ENCODE measurements at regions of chr19 and their contacts with region 1.

Region 1: GRCh38 chr19:50329146-50329925 is at the start of gene KCNC3:
- DNase-seq: peak; percentile 99
- H3K4me3 ChIP-seq: peak within 1 kb of the TSS; percentile 41
- H3K27ac ChIP-seq: peak within 1 kb of the TSS; percentile 40
- H3K4me1 ChIP-seq: peaks cover 15% of the 10 kb centered on the region
- H3K27me3 ChIP-seq: peaks cover 25% of the 10 kb centered on the region
- CTCF ChIP-seq: no peak
- total RNA-seq, gene KCNC3: 6.4 and 6.7 TPM in 2 replicates

Region 2: DNA sequence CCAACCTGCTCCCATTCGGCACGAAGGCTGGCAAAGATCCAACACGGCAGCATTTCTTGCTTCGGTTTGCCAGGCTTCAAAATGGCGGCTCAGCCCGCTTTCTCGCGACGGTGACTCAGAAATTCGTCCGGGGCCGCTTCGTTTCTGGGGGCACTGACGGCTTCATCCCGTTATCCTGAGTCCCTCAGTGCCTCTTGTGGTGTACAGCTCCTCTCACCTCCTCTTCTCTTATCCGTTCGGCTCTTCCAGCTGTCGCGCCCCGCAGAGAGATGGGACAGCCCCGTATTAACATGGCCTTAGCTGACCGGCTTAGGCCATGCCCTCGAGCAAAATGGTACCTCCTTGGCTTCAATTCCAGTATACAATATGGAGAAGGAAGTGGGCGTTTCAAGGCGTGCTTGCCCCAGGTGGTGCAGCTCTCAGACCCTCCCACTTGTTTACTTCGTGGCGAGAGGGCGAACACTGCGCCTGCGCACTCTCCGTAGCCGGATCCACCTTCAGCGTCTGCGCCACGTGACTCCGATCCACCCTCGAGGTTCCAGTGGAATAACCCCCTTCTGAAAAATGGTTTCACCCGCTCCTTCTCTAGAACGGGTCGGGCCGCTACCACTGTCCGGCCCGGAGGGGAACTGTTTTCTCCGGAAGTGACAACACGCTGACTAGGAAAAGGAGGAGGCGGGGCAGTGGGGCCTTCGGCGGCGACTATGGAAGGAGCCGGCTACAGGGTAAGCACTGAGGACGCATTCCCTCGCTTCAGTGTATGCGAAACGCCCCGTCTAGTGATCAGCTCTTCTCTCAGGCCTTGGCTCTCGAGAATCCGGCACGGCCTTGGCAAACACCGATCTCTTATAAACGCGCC is 452.1 kb before region 1 on chr19 and contains the starts of genes AKT1S1 and TBC1D17:
- CTCF ChIA-PET with region 1: no interaction called
- POLR2A ChIA-PET with region 1: interaction called, 12 read pairs
- intact Hi-C with region 1: no loop called
- DNase-seq: peak; percentile 100
- H3K4me3 ChIP-seq: peak within 1 kb of the TSS; percentile 95
- H3K27ac ChIP-seq: peak within 1 kb of the TSS; percentile 99
- H3K4me1 ChIP-seq: peaks cover 17% of the 10 kb centered on the region
- H3K27me3 ChIP-seq: no peaks in the 10 kb centered on the region
- CTCF ChIP-seq: no peak
- total RNA-seq, gene AKT1S1: 80.3 and 81.5 TPM in 2 replicates
- total RNA-seq, gene TBC1D17: 35.1 and 40.0 TPM in 2 replicates

Region 3: GRCh38 chr19:50252111-50252886 is 77.0 kb before region 1 on chr19:
- CTCF ChIA-PET with region 1: interaction called, 19 read pairs
- POLR2A ChIA-PET with region 1: no interaction called
- intact Hi-C with region 1: loop called (anchors 2 kb)
- DNase-seq: peak; percentile 51
- H3K4me3 ChIP-seq: no peak overlapping the region
- H3K27ac ChIP-seq: no peak overlapping the region
- H3K4me1 ChIP-seq: no peaks in the 10 kb centered on the region
- H3K27me3 ChIP-seq: no peaks in the 10 kb centered on the region
- CTCF ChIP-seq: peak; percentile 77

Region 4: GRCh38 chr19:50311723-50312635 is 17.4 kb before region 1 on chr19:
- CTCF ChIA-PET with region 1: interaction called, 18 read pairs
- POLR2A ChIA-PET with region 1: interaction called, 6 read pairs
- intact Hi-C with region 1: no loop called
- DNase-seq: peak; percentile 94
- H3K4me3 ChIP-seq: peak overlapping the region; percentile 32
- H3K27ac ChIP-seq: no peak overlapping the region
- H3K4me1 ChIP-seq: peaks cover 23% of the 10 kb centered on the region
- H3K27me3 ChIP-seq: peaks cover 18% of the 10 kb centered on the region
- CTCF ChIP-seq: 0 out of 2 replicates have a peak, but pooled peaks have one; percentile 12

Region 5: DNA sequence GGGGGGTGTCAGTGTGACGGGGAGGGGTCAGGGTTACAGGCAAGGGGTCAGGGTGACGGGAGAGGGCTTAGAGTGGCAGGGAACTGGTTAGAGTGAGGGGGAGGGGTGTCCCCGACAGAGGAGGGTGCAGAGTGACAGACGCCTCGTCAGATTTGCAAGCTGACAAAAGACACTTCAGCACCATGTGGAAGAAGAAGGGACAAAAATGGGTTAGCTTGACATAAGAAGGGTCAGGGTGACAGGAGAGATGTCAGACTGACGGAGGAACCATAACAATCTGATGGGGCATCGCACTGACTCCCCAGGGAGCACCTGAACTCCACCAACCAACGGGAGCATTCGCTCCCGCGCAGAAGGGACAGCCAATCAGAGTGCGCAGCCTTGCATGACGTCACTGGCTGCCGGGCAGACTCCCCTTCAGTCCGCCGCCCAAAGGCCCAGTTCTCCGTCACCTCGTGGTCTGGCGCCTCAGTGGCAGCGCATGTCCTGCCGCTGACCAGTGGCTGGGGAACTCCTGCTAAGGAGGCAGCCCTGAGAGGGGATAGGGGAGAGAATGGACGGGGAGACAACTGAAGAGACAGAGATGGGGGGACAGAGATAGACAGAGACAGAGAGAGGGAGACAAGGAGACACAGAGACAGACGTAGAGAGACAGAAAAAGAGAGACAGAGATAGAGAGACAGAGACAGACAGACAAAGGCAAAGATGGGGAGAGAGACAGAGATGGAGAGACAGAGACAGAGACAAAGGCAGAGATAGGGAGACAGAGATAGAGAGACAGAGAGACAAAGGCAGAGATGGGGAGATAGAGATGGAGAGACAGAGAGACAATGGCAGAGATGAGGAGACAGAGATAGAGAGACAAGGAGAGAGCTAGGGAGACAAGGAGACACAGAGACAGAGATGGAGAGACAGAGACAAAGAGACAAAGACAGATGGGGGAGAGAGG is 350.1 kb after region 1 on chr19:
- CTCF ChIA-PET with region 1: no interaction called
- POLR2A ChIA-PET with region 1: no interaction called
- intact Hi-C with region 1: no loop called
- DNase-seq: peak; percentile 88
- H3K4me3 ChIP-seq: no peak overlapping the region
- H3K27ac ChIP-seq: no peak overlapping the region
- H3K4me1 ChIP-seq: no peaks in the 10 kb centered on the region
- H3K27me3 ChIP-seq: no peaks in the 10 kb centered on the region
- CTCF ChIP-seq: no peak